ENCODE measurements at regions of chr9 and their contacts with region 1.

Region 1: DNA sequence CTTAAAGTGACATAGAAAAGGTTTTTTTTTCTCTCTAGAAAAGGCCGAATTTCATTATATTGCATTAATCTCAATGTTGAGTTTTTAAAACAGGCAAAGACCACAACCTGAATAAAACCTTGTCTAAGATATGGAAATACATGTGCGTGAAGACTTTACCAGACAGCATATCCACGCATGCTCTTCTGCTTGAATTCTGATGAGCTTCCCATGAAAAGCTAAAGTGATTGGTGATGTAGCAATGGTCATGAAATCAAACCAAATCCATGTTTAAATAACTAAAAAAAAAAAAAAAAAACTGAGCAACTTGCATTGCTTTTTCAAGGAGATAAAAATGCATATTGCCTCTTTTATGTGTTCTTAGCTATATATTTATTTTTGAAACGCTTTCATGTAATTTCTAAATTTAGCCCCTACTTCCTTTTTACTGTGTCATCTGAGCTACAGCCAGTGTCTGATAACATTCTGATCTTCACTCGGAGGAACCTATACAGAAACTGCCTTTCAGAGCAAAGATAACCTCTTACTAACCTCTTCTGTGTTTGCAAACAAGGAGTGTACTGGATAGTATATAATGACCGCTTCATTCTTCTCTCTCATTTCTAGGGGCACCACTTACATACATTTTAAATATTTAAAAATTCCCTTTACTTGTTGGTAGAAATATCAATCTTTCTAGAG is 179.1 kb upstream of the GNA14 start:
- DNase-seq: no peak
- H3K4me3 Mint-ChIP-seq: peak overlapping the region; percentile 43
- H3K27ac Mint-ChIP-seq: peak overlapping the region; percentile 56
- H3K4me1 Mint-ChIP-seq: peaks cover 33% of the 10 kb centered on the region
- H3K27me3 Mint-ChIP-seq: no peaks in the 10 kb centered on the region

Region 2: GRCh38 chr9:77697238-77697984 is 129.8 kb before region 1 on chr9:
- intact Hi-C with region 1: no loop called
- DNase-seq: no peak
- H3K4me3 Mint-ChIP-seq: no peak overlapping the region
- H3K27ac Mint-ChIP-seq: no peak overlapping the region
- H3K4me1 Mint-ChIP-seq: no peaks in the 10 kb centered on the region
- H3K27me3 Mint-ChIP-seq: peaks cover 18% of the 10 kb centered on the region

Region 3: GRCh38 chr9:77751341-77752091 is 75.7 kb before region 1 on chr9:
- intact Hi-C with region 1: no loop called
- DNase-seq: no peak
- H3K4me3 Mint-ChIP-seq: no peak overlapping the region
- H3K27ac Mint-ChIP-seq: peak overlapping the region; percentile 75
- H3K4me1 Mint-ChIP-seq: peaks cover 22% of the 10 kb centered on the region
- H3K27me3 Mint-ChIP-seq: no peaks in the 10 kb centered on the region

Region 4: DNA sequence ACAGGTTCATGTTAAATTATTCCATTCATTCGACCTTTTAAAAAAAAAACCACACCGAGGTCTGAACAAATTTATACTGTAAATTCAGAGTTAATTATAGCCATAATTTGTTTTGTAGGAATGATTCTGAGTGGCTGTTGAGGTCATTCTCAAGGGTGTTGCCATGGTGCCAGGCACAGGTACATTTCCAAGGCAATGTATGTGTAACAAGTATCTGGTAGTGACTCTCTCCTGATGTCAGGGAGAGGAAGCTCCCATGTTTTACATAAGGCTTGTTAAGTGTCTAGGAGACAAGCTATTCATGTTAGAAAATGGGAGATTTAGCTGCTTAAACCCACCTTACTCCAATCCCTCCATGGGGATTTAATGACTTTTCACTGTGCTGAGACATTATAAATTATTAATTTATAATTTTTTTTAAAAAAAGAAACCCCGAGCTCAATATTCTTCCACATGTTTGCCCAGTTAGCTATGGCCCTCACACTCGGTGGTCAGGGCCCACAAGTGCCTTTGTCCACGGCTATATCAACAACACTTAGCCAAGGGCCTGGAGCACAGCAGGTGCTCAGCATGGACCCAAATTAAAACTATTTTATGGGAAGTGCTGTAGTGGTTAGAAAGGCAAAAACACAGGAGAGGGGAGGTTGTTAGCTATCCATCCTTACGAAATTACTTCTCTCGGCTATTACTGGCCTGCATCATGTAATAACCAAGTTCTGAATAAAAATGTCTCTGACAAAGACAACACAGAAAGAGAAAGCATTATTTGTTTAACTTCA is 24.5 kb before region 1 on chr9:
- intact Hi-C with region 1: loop called (anchors 2 kb)
- DNase-seq: no peak
- H3K4me3 Mint-ChIP-seq: no peak overlapping the region
- H3K27ac Mint-ChIP-seq: no peak overlapping the region
- H3K4me1 Mint-ChIP-seq: peaks cover 34% of the 10 kb centered on the region
- H3K27me3 Mint-ChIP-seq: no peaks in the 10 kb centered on the region

Measured in activated T-helper 2 cell treated with anti-CD3 and anti-CD28 coated beads, Interferon-gamma antibody, Interleukin-2, Interleukin-4, amounts not matched to agents 10 μg/mL and 5 μg/mL and 100 μg/mL, durations not matched to agents 14 hours and 24 hours and 36 hours (primary cell).